CD4-positive, alpha-beta T cell (primary cell): ENCODE measurements at regions of chr19 and their contacts with region 1.

Region 1: GRCh38 chr19:35509861-35510625 is 3.4 kb downstream of the DMKN start:
- DNase-seq: peak; percentile 53 to 82 (median 64)
- ATAC-seq: peak; percentile 74
- H3K4me3 ChIP-seq: peak overlapping the region; percentile 52
- H3K4me3 Mint-ChIP-seq: peak overlapping the region; percentile 72
- H3K27ac ChIP-seq: no peak overlapping the region
- H3K27ac Mint-ChIP-seq: no peak overlapping the region
- H3K4me1 ChIP-seq: peaks cover 20% of the 10 kb centered on the region
- H3K4me1 Mint-ChIP-seq: peaks cover 17% of the 10 kb centered on the region
- H3K27me3 ChIP-seq: peaks cover 26 to 31% of the 10 kb centered on the region in 2 experiments
- H3K27me3 Mint-ChIP-seq: peaks cover 81% of the 10 kb centered on the region
- CTCF ChIP-seq: peak; percentile 86

Region 2: GRCh38 chr19:35592226-35592625 is 82.2 kb after region 1 on chr19:
- CTCF ChIA-PET with region 1: no interaction called
- POLR2A ChIA-PET with region 1: no interaction called
- intact Hi-C with region 1: loop called (anchors 1 kb)
- DNase-seq: peak in 4 of 14 experiments; percentile 38 to 71 (median 55)
- ATAC-seq: no peak
- H3K4me3 ChIP-seq: no peak overlapping the region
- H3K4me3 Mint-ChIP-seq: no peak overlapping the region
- H3K27ac ChIP-seq: no peak overlapping the region
- H3K27ac Mint-ChIP-seq: no peak overlapping the region
- H3K4me1 ChIP-seq: no peaks in the 10 kb centered on the region
- H3K4me1 Mint-ChIP-seq: no peaks in the 10 kb centered on the region
- H3K27me3 ChIP-seq: no peaks in the 10 kb centered on the region
- H3K27me3 Mint-ChIP-seq: peaks cover 17% of the 10 kb centered on the region
- CTCF ChIP-seq: peak; percentile 59